HEK293 (cell line): ENCODE measurements at regions of chr3 and their contacts with region 1.

Region 1: GRCh38 chr3:184174646-184175492 is at the start of gene AP2M1:
- H3K4me3 ChIP-seq: peak within 1 kb of the TSS; percentile 96
- H3K27ac ChIP-seq: peak within 1 kb of the TSS; percentile 78
- H3K4me1 ChIP-seq: peaks cover 3% of the 10 kb centered on the region; the same call in 1 of the 2 replicates
- CTCF ChIP-seq: peak; percentile 74

Region 2: DNA sequence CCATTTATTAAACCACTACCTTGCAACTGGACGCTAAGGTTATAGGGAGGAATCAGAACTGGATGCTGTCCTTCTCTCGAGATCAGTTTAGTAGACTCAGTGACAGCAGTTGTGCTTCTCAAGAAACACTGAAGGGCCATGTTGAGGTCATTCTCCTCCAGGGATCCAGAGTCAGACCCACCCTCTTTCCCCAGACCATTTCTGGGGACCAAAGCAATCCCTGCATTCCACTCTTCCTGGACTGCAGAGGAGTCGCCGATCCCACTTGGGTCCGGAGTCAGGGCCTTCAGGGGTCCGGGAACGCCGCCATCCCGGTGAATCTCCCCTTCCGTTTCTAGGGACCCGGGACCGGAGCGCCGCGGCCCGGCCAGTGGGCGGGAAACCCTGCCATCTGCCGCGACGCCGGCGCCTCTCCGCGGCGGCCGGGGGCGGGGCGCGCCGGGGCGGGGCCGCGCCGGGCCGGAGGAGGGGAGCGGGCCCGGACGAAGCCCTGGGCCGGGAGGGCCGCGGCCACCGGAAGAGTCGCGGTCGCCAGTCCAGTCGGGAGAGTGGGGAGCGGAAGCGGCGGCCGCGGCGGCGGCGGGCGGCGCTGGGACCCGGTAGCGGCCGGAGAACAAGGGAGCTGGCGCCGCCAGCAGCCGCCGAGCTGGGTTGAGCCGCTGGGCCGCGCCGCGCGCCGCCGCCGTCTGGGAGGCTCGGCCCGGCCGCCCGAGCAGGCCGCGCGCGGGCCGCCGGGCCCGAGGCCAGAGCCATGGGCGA is 19.8 kb before region 1 on chr3 and contains the start of gene DVL3:
- CTCF ChIA-PET with region 1: no interaction called
- POLR2A ChIA-PET with region 1: interaction called, 11 read pairs
- H3K4me3 ChIP-seq: peak within 1 kb of the TSS; percentile 82
- H3K27ac ChIP-seq: peak within 1 kb of the TSS; percentile 95
- H3K4me1 ChIP-seq: no peaks in the 10 kb centered on the region
- CTCF ChIP-seq: no peak

Region 3: GRCh38 chr3:184185461-184186308 is 10.8 kb after region 1 on chr3 and contains the start of gene ABCF3:
- CTCF ChIA-PET with region 1: no interaction called
- POLR2A ChIA-PET with region 1: interaction called, 34 read pairs
- H3K4me3 ChIP-seq: peak within 1 kb of the TSS; percentile 91
- H3K27ac ChIP-seq: peak within 1 kb of the TSS; percentile 84
- H3K4me1 ChIP-seq: 0 out of 2 replicates have a peak, but pooled peaks cover 5% of the 10 kb centered on the region
- CTCF ChIP-seq: no peak

Region 4: GRCh38 chr3:184203526-184203925 is 28.7 kb after region 1 on chr3:
- CTCF ChIA-PET with region 1: no interaction called
- POLR2A ChIA-PET with region 1: no interaction called
- H3K4me3 ChIP-seq: no peak overlapping the region
- H3K27ac ChIP-seq: no peak overlapping the region
- H3K4me1 ChIP-seq: no peaks in the 10 kb centered on the region
- CTCF ChIP-seq: no peak